ENCODE measurements at regions of chr6 and their contacts with region 1.

Region 1: GRCh38 chr6:134174672-134175198 is 122.3 kb upstream of the SLC2A12 start:
- DNase-seq: peak; percentile 82 to 93
- H3K4me3 ChIP-seq: peak overlapping the region; percentile 73
- H3K27ac ChIP-seq: peak overlapping the region; percentile 84
- H3K4me1 ChIP-seq: peaks cover 21% of the 10 kb centered on the region
- H3K27me3 ChIP-seq: no peaks in the 10 kb centered on the region
- CTCF ChIP-seq: no peak

Region 2: DNA sequence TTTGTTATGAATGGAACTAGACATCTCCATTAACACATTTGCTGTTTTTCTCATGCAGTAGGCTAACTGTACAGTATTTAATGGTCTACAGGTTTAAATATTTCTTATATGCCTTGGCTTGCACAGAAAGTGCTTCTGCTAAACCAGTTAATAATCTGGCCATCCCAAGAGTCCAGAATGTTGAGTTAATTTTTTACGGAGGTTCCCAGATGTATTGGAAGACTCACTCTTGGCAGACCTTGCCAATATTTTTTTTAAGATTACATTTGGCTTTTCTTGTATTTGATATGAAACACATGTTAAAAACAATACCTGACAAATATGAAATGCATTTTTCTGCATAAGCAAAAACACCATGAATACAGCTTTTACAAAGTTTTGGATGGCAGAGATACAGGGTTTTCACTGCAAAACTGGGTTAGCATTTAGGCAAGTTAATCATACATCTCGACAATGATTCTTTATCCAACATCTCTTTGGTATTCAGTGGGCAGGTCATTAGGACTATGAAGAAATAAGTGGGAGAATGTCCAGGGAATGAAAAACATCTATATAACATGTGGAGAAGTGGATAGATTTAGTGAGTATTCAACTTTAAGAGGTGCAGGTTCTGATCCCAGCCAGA is 49.2 kb after region 1 on chr6:
- CTCF ChIA-PET with region 1: no interaction called
- POLR2A ChIA-PET with region 1: no interaction called
- intact Hi-C with region 1: no loop called
- DNase-seq: no peak
- H3K4me3 ChIP-seq: no peak overlapping the region
- H3K27ac ChIP-seq: no peak overlapping the region
- H3K4me1 ChIP-seq: no peaks in the 10 kb centered on the region
- H3K27me3 ChIP-seq: no peaks in the 10 kb centered on the region
- CTCF ChIP-seq: no peak

Region 3: DNA sequence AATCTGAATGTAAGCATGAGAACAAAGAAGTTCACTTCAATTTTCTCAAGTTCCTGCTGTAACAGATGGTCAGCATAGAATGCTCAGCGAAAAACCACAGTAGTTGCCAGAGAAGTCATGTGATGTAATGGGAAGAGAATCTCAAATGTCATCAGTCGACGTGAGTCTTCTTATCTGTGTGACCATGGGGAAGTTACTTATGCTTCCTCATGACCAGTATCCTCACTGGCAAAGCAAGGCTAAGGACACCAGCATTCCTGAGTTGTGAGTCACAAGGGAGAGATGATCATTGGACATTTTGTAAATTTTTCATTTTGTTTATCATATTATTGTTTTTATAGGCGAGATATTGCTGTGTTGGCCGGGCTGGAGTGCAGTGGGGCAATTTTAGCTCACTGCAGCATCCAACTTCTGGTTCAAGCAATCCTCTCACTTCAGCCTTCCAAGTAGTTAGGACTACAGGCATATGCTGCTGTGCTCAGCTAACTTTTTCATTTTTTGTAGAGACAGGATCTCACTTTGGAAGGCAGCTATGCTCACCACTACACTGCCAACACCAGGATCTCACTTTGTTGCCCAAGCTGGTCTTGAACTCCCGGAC is 121.3 kb after region 1 on chr6:
- CTCF ChIA-PET with region 1: no interaction called
- POLR2A ChIA-PET with region 1: interaction called, 3 read pairs
- intact Hi-C with region 1: loop called (anchors 1 kb)
- DNase-seq: peak; percentile 63 to 99
- H3K4me3 ChIP-seq: no peak overlapping the region
- H3K27ac ChIP-seq: peak overlapping the region; percentile 70
- H3K4me1 ChIP-seq: peaks cover 30% of the 10 kb centered on the region
- H3K27me3 ChIP-seq: no peaks in the 10 kb centered on the region
- CTCF ChIP-seq: no peak

Region 4: GRCh38 chr6:134422426-134423231 is 247.9 kb after region 1 on chr6:
- CTCF ChIA-PET with region 1: no interaction called
- POLR2A ChIA-PET with region 1: no interaction called
- intact Hi-C with region 1: loop called (anchors 2 kb)
- DNase-seq: peak; percentile 31 to 78
- H3K4me3 ChIP-seq: no peak overlapping the region
- H3K27ac ChIP-seq: peak overlapping the region; percentile 53
- H3K4me1 ChIP-seq: peaks cover 55% of the 10 kb centered on the region
- H3K27me3 ChIP-seq: no peaks in the 10 kb centered on the region
- CTCF ChIP-seq: no peak

Region 5: GRCh38 chr6:134537146-134537555 is 362.4 kb after region 1 on chr6:
- CTCF ChIA-PET with region 1: no interaction called
- POLR2A ChIA-PET with region 1: no interaction called
- intact Hi-C with region 1: loop called (anchors 1 kb)
- DNase-seq: peak; percentile 66 to 96
- H3K4me3 ChIP-seq: no peak overlapping the region
- H3K27ac ChIP-seq: peak overlapping the region; percentile 72
- H3K4me1 ChIP-seq: peaks cover 23% of the 10 kb centered on the region
- H3K27me3 ChIP-seq: no peaks in the 10 kb centered on the region
- CTCF ChIP-seq: no peak

Region 6: DNA sequence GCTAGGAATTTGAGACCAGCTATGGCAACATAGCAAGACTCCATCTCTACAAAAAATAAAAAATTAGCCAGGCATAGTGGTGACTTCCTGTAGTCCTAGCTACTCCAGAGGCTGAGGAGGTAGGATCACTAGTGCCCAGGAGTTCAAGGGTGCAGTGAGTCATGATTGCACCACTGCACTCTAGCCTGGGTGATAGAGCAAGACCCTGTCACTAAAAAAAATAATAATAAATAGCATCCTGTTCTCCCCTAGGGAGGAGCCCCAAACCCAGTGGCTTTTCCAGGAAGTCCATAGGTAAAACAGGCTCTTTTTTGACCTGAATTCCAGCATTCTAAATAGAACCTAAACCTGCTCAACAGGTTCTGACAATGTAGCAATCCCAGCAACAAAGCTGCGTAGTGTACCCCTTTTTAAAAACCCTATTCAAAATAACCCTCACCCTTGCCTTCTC is 583.2 kb after region 1 on chr6:
- CTCF ChIA-PET with region 1: no interaction called
- POLR2A ChIA-PET with region 1: no interaction called
- intact Hi-C with region 1: loop called (anchors 1 kb)
- DNase-seq: peak; percentile 78 to 99
- H3K4me3 ChIP-seq: peak overlapping the region; percentile 15; the same call in 1 of the 2 replicates
- H3K27ac ChIP-seq: peak overlapping the region; percentile 77
- H3K4me1 ChIP-seq: peaks cover 37% of the 10 kb centered on the region
- H3K27me3 ChIP-seq: no peaks in the 10 kb centered on the region
- CTCF ChIP-seq: no peak

Region 7: GRCh38 chr6:134938896-134939295 is 764.2 kb after region 1 on chr6:
- CTCF ChIA-PET with region 1: interaction called, 5 read pairs
- POLR2A ChIA-PET with region 1: no interaction called
- intact Hi-C with region 1: loop called (anchors 1 kb)
- DNase-seq: no peak
- H3K4me3 ChIP-seq: no peak overlapping the region
- H3K27ac ChIP-seq: no peak overlapping the region
- H3K4me1 ChIP-seq: no peaks in the 10 kb centered on the region
- H3K27me3 ChIP-seq: no peaks in the 10 kb centered on the region
- CTCF ChIP-seq: no peak